CD4-positive, alpha-beta memory T cell (primary cell): ENCODE measurements at regions of chr1 and their contacts with region 1.

Region 1: GRCh38 chr1:193462629-193463320 is 276.4 kb upstream of the B3GALT2 start:
- DNase-seq: peak; percentile 31 to 59 (median 53)
- H3K4me3 ChIP-seq: peak overlapping the region in 1 of 2 donors; percentile 6
- H3K4me3 Mint-ChIP-seq: peak overlapping the region; percentile 47 to 84 (median 82)
- H3K27ac ChIP-seq: peak overlapping the region; percentile 48
- H3K27ac Mint-ChIP-seq: peak overlapping the region in 6 of 7 donors; percentile 87 to 98 (median 94)
- H3K4me1 ChIP-seq: peaks cover 67% of the 10 kb centered on the region
- H3K4me1 Mint-ChIP-seq: peaks cover 40 to 68% (median 46%) of the 10 kb centered on the region in 4 donors
- H3K27me3 ChIP-seq: no peaks in the 10 kb centered on the region
- H3K27me3 Mint-ChIP-seq: no peaks in the 10 kb centered on the region

Region 2: GRCh38 chr1:193417945-193418744 is 44.6 kb before region 1 on chr1:
- CTCF ChIA-PET with region 1: interaction called, 3 read pairs
- POLR2A ChIA-PET with region 1: interaction called, 117 read pairs
- intact Hi-C with region 1: loop called (anchors 5 kb)
- DNase-seq: peak in 4 of 5 donors; percentile 53 to 62 (median 56)
- H3K4me3 ChIP-seq: peak overlapping the region; percentile 24 to 50
- H3K4me3 Mint-ChIP-seq: peak overlapping the region; percentile 79 to 89 (median 84)
- H3K27ac ChIP-seq: peak overlapping the region; percentile 58
- H3K27ac Mint-ChIP-seq: peak overlapping the region; percentile 76 to 97 (median 92)
- H3K4me1 ChIP-seq: peaks cover 34% of the 10 kb centered on the region
- H3K4me1 Mint-ChIP-seq: peaks cover 32 to 54% (median 36%) of the 10 kb centered on the region in 4 donors
- H3K27me3 ChIP-seq: no peaks in the 10 kb centered on the region
- H3K27me3 Mint-ChIP-seq: no peaks in the 10 kb centered on the region

Region 3: GRCh38 chr1:193448682-193449461 is 13.9 kb before region 1 on chr1:
- CTCF ChIA-PET with region 1: interaction called, 3 read pairs
- POLR2A ChIA-PET with region 1: interaction called, 38 read pairs
- intact Hi-C with region 1: loop called (anchors 1 kb)
- DNase-seq: peak; percentile 39 to 67 (median 41)
- H3K4me3 ChIP-seq: no peak overlapping the region
- H3K4me3 Mint-ChIP-seq: peak overlapping the region in 7 of 8 donors; percentile 1 to 53 (median 9)
- H3K27ac ChIP-seq: peak overlapping the region; percentile 36
- H3K27ac Mint-ChIP-seq: peak overlapping the region; percentile 68 to 95 (median 82)
- H3K4me1 ChIP-seq: peaks cover 18% of the 10 kb centered on the region
- H3K4me1 Mint-ChIP-seq: peaks cover 16 to 23% (median 18%) of the 10 kb centered on the region in 4 donors
- H3K27me3 ChIP-seq: no peaks in the 10 kb centered on the region
- H3K27me3 Mint-ChIP-seq: no peaks in the 10 kb centered on the region

Region 4: DNA sequence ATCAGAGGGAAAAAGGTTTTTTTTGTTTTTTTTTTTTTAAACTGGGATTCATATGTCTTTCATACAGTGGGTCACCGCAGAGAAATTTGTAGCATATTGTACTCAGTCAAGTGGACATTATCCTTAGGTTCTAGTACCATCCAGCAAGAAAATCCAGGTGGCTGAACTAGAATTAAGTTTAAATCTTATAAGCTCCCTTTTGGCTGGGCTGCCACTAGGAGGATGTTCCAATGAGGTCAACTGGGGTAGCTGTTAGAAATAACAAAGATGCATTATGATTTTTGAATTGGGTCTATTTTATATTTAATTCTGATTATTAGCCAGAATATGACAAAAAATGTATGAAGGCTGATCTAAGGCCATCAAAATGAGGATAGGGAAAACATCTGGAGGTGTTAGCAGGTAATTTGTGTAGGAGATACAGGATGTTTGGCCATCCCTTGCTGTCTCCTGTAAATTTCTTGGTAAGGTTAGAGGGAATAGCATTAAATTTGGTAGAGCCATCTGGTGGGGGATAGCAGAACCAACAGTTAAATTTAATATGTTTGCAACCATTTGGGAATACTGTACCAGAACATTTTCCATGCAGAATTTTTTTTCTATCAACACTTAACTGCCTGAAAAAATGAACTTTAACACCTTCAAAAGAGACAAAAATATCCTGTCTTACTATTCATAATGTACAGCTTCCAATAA is 292.1 kb after region 1 on chr1:
- CTCF ChIA-PET with region 1: no interaction called
- POLR2A ChIA-PET with region 1: interaction called, 4 read pairs
- intact Hi-C with region 1: loop called (anchors 5 kb)
- DNase-seq: no peak
- H3K4me3 ChIP-seq: no peak overlapping the region
- H3K4me3 Mint-ChIP-seq: no peak overlapping the region
- H3K27ac ChIP-seq: no peak overlapping the region
- H3K27ac Mint-ChIP-seq: peak overlapping the region in 1 of 7 donors; percentile 10
- H3K4me1 ChIP-seq: peaks cover 5% of the 10 kb centered on the region
- H3K4me1 Mint-ChIP-seq: peaks cover 2 to 13% (median 3%) of the 10 kb centered on the region in 4 donors
- H3K27me3 ChIP-seq: no peaks in the 10 kb centered on the region
- H3K27me3 Mint-ChIP-seq: no peaks in the 10 kb centered on the region